ENCODE measurements at regions of chr19 and their contacts with region 1.

Region 1: GRCh38 chr19:38263689-38264485 is 486 bp upstream of the SPINT2 start:
- DNase-seq: peak; percentile 98 to 100
- H3K4me3 ChIP-seq: peak overlapping the region; percentile 15
- H3K4me3 Mint-ChIP-seq: peak overlapping the region; percentile 99
- H3K27ac Mint-ChIP-seq: peak overlapping the region; percentile 98
- H3K4me1 ChIP-seq: peaks cover 49% of the 10 kb centered on the region
- H3K4me1 Mint-ChIP-seq: peaks cover 54% of the 10 kb centered on the region
- H3K27me3 ChIP-seq: no peaks in the 10 kb centered on the region
- H3K27me3 Mint-ChIP-seq: no peaks in the 10 kb centered on the region
- CTCF ChIP-seq: no peak

Region 2: DNA sequence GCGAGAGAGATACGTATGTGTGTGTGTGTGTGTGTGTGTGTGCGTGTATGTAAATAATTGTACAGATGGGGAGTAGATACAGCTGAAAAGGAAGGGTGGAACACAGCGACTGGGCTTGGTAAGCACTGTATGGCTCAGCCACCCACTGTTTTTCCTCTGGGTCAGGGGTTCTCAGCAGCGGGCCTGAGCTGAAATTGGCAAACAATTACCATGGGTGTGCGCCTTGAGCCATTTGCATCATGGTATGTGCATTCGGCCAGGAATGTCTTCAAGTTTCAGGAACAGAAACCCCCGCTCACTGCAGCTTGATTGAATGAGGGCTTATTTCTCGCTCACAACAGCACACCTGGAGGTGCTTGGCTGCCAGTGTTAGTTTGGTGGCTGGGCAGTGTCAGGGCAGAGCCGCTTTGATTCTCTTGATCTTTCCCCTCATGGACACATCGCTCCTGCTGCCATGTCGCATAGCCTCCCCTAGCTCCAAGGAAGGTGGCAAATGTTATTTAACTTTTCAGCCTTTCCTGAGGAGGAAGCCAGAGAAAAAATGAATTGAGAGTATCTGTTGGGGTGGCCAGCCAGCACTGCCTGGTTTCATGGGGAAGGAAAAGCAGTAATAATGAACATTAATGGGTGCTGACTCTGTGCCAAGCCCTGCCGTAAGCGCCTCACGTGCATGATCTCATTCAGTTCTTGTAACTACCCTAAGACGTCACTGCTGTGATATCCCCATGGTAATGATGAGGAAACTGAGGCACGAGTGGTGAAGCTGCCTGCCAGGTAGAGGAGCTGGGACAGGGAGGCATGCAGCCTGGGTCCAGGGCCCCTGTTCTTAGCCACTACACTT is 230.0 kb before region 1 on chr19:
- CTCF ChIA-PET with region 1: no interaction called
- POLR2A ChIA-PET with region 1: no interaction called
- intact Hi-C with region 1: no loop called
- DNase-seq: no peak
- H3K4me3 ChIP-seq: no peak overlapping the region
- H3K4me3 Mint-ChIP-seq: no peak overlapping the region
- H3K27ac Mint-ChIP-seq: no peak overlapping the region
- H3K4me1 ChIP-seq: no peaks in the 10 kb centered on the region; the same call in 1 of the 2 replicates
- H3K4me1 Mint-ChIP-seq: peaks cover 15% of the 10 kb centered on the region
- H3K27me3 ChIP-seq: no peaks in the 10 kb centered on the region
- H3K27me3 Mint-ChIP-seq: no peaks in the 10 kb centered on the region
- CTCF ChIP-seq: no peak

Region 3: DNA sequence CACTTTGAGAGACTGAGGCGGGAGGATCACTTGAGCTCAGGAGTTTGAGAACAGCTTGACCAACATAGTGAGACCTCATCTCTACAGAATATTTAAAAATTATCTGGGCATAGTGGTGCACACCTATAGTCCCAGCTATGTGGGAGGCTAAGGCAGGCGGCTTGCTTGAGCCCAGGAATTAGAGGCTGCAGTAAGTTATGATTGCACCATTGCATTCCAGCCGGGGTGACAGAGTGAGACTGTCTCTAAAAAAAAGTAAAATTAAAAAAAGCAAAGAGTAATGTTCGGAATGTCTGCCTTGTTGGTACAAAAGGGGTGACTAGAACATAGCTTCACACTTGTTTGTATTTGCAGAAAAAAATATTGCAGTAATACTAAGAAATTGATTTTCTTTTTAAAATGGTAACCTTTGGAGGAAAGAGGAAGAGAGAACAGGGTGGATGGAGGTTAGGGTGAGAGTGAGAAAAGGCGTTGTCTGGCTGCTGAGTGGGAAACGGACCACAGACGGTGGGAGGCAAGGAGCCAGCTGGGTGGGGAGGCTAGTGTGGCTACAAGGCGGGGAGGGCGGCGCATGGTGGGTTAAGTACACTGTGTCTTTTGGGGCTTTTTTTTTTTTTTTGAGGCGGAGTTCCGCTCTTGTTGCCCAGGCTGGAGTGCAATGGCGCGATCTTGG is 17.9 kb before region 1 on chr19:
- CTCF ChIA-PET with region 1: interaction called, 16 read pairs
- POLR2A ChIA-PET with region 1: interaction called, 10 read pairs
- intact Hi-C with region 1: loop called (anchors 1 kb)
- DNase-seq: no peak
- H3K4me3 ChIP-seq: no peak overlapping the region
- H3K4me3 Mint-ChIP-seq: no peak overlapping the region
- H3K27ac Mint-ChIP-seq: peak overlapping the region; percentile 45
- H3K4me1 ChIP-seq: peaks cover 17% of the 10 kb centered on the region
- H3K4me1 Mint-ChIP-seq: peaks cover 28% of the 10 kb centered on the region
- H3K27me3 ChIP-seq: no peaks in the 10 kb centered on the region
- H3K27me3 Mint-ChIP-seq: no peaks in the 10 kb centered on the region
- CTCF ChIP-seq: no peak

Region 4: DNA sequence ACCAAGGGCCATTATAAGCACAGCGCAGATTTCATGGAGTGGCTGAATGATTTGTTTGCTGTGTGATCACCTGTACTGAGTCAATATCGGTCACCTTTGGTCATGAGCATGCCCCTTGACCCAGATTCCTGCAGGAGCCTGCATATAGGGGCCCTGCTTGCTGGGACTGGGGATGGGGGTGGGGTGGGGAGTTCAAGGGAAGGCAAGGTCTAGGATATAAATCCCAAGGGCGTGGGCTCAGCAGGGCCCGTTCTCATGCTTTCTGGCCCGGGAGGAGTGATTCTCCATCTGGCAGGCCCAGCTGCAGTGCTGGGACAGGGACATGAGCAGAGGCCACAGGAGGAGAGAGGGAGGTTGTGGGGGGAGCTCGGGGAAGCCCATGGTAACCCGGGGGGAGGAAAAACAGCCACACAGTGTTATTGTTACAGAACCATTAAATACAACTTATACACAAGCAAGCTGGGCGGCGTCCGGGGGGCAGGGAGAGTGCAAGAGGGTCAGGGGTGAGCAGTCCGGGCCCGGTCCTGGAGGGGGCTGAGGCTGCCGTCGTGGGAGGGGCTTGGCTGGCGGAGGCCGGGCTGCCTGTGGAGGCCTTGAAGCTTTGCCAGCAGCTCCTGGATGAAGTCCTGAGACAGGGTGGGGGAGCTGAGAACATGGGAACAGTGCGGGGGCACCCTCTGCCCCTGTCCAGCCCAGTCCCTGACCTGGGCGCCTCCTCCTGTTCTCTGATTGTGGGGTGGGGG is 12.9 kb before region 1 on chr19:
- CTCF ChIA-PET with region 1: interaction called, 6 read pairs
- POLR2A ChIA-PET with region 1: interaction called, 10 read pairs
- intact Hi-C with region 1: loop called (anchors 1 kb)
- DNase-seq: peak; percentile 87 to 95
- H3K4me3 ChIP-seq: no peak overlapping the region
- H3K4me3 Mint-ChIP-seq: peak overlapping the region; percentile 42
- H3K27ac Mint-ChIP-seq: peak overlapping the region; percentile 66
- H3K4me1 ChIP-seq: peaks cover 54% of the 10 kb centered on the region
- H3K4me1 Mint-ChIP-seq: peaks cover 32% of the 10 kb centered on the region
- H3K27me3 ChIP-seq: no peaks in the 10 kb centered on the region
- H3K27me3 Mint-ChIP-seq: no peaks in the 10 kb centered on the region
- CTCF ChIP-seq: no peak

Region 5: GRCh38 chr19:38277969-38278680 is 14.2 kb after region 1 on chr19:
- CTCF ChIA-PET with region 1: no interaction called
- POLR2A ChIA-PET with region 1: interaction called, 9 read pairs
- intact Hi-C with region 1: loop called (anchors 1 kb)
- DNase-seq: no peak
- H3K4me3 ChIP-seq: no peak overlapping the region
- H3K4me3 Mint-ChIP-seq: peak overlapping the region; percentile 35
- H3K27ac Mint-ChIP-seq: peak overlapping the region; percentile 72
- H3K4me1 ChIP-seq: peaks cover 45% of the 10 kb centered on the region
- H3K4me1 Mint-ChIP-seq: peaks cover 29% of the 10 kb centered on the region
- H3K27me3 ChIP-seq: no peaks in the 10 kb centered on the region
- H3K27me3 Mint-ChIP-seq: no peaks in the 10 kb centered on the region
- CTCF ChIP-seq: no peak

Region 6: GRCh38 chr19:38315657-38316476 is 52.0 kb after region 1 on chr19 and contains the start of gene YIF1B:
- CTCF ChIA-PET with region 1: no interaction called
- POLR2A ChIA-PET with region 1: interaction called, 6 read pairs
- intact Hi-C with region 1: loop called (anchors 1 kb)
- DNase-seq: peak; percentile 98 to 99
- H3K4me3 ChIP-seq: peak within 1 kb of the TSS; percentile 61
- H3K4me3 Mint-ChIP-seq: peak within 1 kb of the TSS; percentile 96
- H3K27ac Mint-ChIP-seq: peak within 1 kb of the TSS; percentile 91
- H3K4me1 ChIP-seq: peaks cover 4% of the 10 kb centered on the region; the same call in 1 of the 2 replicates
- H3K4me1 Mint-ChIP-seq: peaks cover 11% of the 10 kb centered on the region
- H3K27me3 ChIP-seq: no peaks in the 10 kb centered on the region
- H3K27me3 Mint-ChIP-seq: no peaks in the 10 kb centered on the region
- CTCF ChIP-seq: no peak
- total RNA-seq, gene YIF1B: 61.7 and 66.7 TPM in 2 replicates

Region 7: GRCh38 chr19:38346837-38347236 is 83.0 kb after region 1 on chr19:
- CTCF ChIA-PET with region 1: no interaction called
- POLR2A ChIA-PET with region 1: no interaction called
- intact Hi-C with region 1: no loop called
- DNase-seq: no peak
- H3K4me3 ChIP-seq: no peak overlapping the region
- H3K4me3 Mint-ChIP-seq: no peak overlapping the region
- H3K27ac Mint-ChIP-seq: no peak overlapping the region
- H3K4me1 ChIP-seq: no peaks in the 10 kb centered on the region
- H3K4me1 Mint-ChIP-seq: peaks cover 5% of the 10 kb centered on the region
- H3K27me3 ChIP-seq: no peaks in the 10 kb centered on the region
- H3K27me3 Mint-ChIP-seq: no peaks in the 10 kb centered on the region
- CTCF ChIP-seq: no peak

Region 8: GRCh38 chr19:38387550-38388348 is 123.9 kb after region 1 on chr19 and contains the start of gene GGN:
- CTCF ChIA-PET with region 1: no interaction called
- POLR2A ChIA-PET with region 1: interaction called, 23 read pairs
- intact Hi-C with region 1: no loop called
- DNase-seq: peak; percentile 91 to 94
- H3K4me3 ChIP-seq: peak within 1 kb of the TSS; percentile 60
- H3K4me3 Mint-ChIP-seq: peak within 1 kb of the TSS; percentile 83
- H3K27ac Mint-ChIP-seq: peak within 1 kb of the TSS; percentile 43
- H3K4me1 ChIP-seq: peaks cover 25% of the 10 kb centered on the region
- H3K4me1 Mint-ChIP-seq: peaks cover 18% of the 10 kb centered on the region
- H3K27me3 ChIP-seq: no peaks in the 10 kb centered on the region
- H3K27me3 Mint-ChIP-seq: no peaks in the 10 kb centered on the region
- CTCF ChIP-seq: no peak
- total RNA-seq, gene GGN: 0.79 TPM in 1 of 2 replicates, not detected in the other